ENCODE measurements at regions of chr3 and their contacts with region 1.

Region 1: GRCh38 chr3:100708967-100709841 is at the start of gene TFG:
- DNase-seq: peak; percentile 93 to 100 (median 97)
- ATAC-seq: peak; percentile 89
- H3K4me3 ChIP-seq: peak within 1 kb of the TSS; percentile 59 to 94
- H3K4me3 Mint-ChIP-seq: peak within 1 kb of the TSS; percentile 91
- H3K27ac ChIP-seq: peak within 1 kb of the TSS; percentile 87 to 90
- H3K27ac Mint-ChIP-seq: peak within 1 kb of the TSS; percentile 96
- H3K4me1 ChIP-seq: peaks cover 22% of the 10 kb centered on the region
- H3K4me1 Mint-ChIP-seq: peaks cover 47% of the 10 kb centered on the region
- H3K27me3 ChIP-seq: no peaks in the 10 kb centered on the region
- H3K27me3 Mint-ChIP-seq: no peaks in the 10 kb centered on the region
- CTCF ChIP-seq: no peak
- total RNA-seq, gene TFG: 76.3 to 88.3 TPM

Region 2: GRCh38 chr3:99808151-99808794 is 900.9 kb before region 1 on chr3:
- CTCF ChIA-PET with region 1: no interaction called
- POLR2A ChIA-PET with region 1: no interaction called
- intact Hi-C with region 1: loop called in 1 of 2 experiments (anchors 5 kb)
- DNase-seq: peak in 6 of 9 experiments; percentile 10 to 72 (median 44)
- ATAC-seq: peak; percentile 72
- H3K4me3 ChIP-seq: no peak overlapping the region
- H3K4me3 Mint-ChIP-seq: no peak overlapping the region
- H3K27ac ChIP-seq: no peak overlapping the region
- H3K27ac Mint-ChIP-seq: no peak overlapping the region
- H3K4me1 ChIP-seq: no peaks in the 10 kb centered on the region
- H3K4me1 Mint-ChIP-seq: peaks cover 3% of the 10 kb centered on the region
- H3K27me3 ChIP-seq: no peaks in the 10 kb centered on the region
- H3K27me3 Mint-ChIP-seq: no peaks in the 10 kb centered on the region
- CTCF ChIP-seq: peak; percentile 76

Region 3: GRCh38 chr3:100260685-100261484 is 448.3 kb before region 1 on chr3 and contains the start of gene TBC1D23:
- CTCF ChIA-PET with region 1: no interaction called
- POLR2A ChIA-PET with region 1: interaction called, 5 read pairs
- intact Hi-C with region 1: loop called in 1 of 2 experiments (anchors 2 kb)
- DNase-seq: peak; percentile 91 to 99 (median 97)
- ATAC-seq: peak; percentile 98
- H3K4me3 ChIP-seq: peak within 1 kb of the TSS; percentile 80 to 90
- H3K4me3 Mint-ChIP-seq: peak within 1 kb of the TSS; percentile 95
- H3K27ac ChIP-seq: peak within 1 kb of the TSS; percentile 91 to 94
- H3K27ac Mint-ChIP-seq: peak within 1 kb of the TSS; percentile 98
- H3K4me1 ChIP-seq: peaks cover 17% of the 10 kb centered on the region
- H3K4me1 Mint-ChIP-seq: peaks cover 60% of the 10 kb centered on the region
- H3K27me3 ChIP-seq: no peaks in the 10 kb centered on the region
- H3K27me3 Mint-ChIP-seq: no peaks in the 10 kb centered on the region
- CTCF ChIP-seq: no peak
- total RNA-seq, gene TBC1D23: 38.9 to 43.9 TPM

Region 4: GRCh38 chr3:100400780-100401673 is 308.2 kb before region 1 on chr3 and contains the starts of genes LNP1 and TOMM70:
- CTCF ChIA-PET with region 1: no interaction called
- POLR2A ChIA-PET with region 1: interaction called, 17 read pairs
- intact Hi-C with region 1: loop called (anchors 1 to 2 kb)
- DNase-seq: peak; percentile 85 to 97 (median 94)
- ATAC-seq: peak; percentile 85
- H3K4me3 ChIP-seq: peak within 1 kb of the TSS; percentile 76 to 92
- H3K4me3 Mint-ChIP-seq: peak within 1 kb of the TSS; percentile 98
- H3K27ac ChIP-seq: peak within 1 kb of the TSS; percentile 77 to 92
- H3K27ac Mint-ChIP-seq: peak within 1 kb of the TSS; percentile 99
- H3K4me1 ChIP-seq: peaks cover 46% of the 10 kb centered on the region
- H3K4me1 Mint-ChIP-seq: peaks cover 73% of the 10 kb centered on the region
- H3K27me3 ChIP-seq: no peaks in the 10 kb centered on the region
- H3K27me3 Mint-ChIP-seq: no peaks in the 10 kb centered on the region
- CTCF ChIP-seq: no peak
- total RNA-seq, gene LNP1: 1.1 to 1.2 TPM
- total RNA-seq, gene TOMM70: 27.7 to 30.5 TPM

Region 5: GRCh38 chr3:101561630-101562328 is 852.6 kb after region 1 on chr3 and contains the start of gene TRMT10C:
- CTCF ChIA-PET with region 1: no interaction called
- POLR2A ChIA-PET with region 1: no interaction called
- intact Hi-C with region 1: loop called (anchors 1 to 5 kb)
- DNase-seq: peak; percentile 86 to 96 (median 92)
- ATAC-seq: peak; percentile 95
- H3K4me3 ChIP-seq: peak within 1 kb of the TSS; percentile 83 to 96
- H3K4me3 Mint-ChIP-seq: peak within 1 kb of the TSS; percentile 99
- H3K27ac ChIP-seq: peak within 1 kb of the TSS; percentile 86 to 93
- H3K27ac Mint-ChIP-seq: peak within 1 kb of the TSS; percentile 99
- H3K4me1 ChIP-seq: peaks cover 12% of the 10 kb centered on the region
- H3K4me1 Mint-ChIP-seq: peaks cover 27% of the 10 kb centered on the region
- H3K27me3 ChIP-seq: no peaks in the 10 kb centered on the region
- H3K27me3 Mint-ChIP-seq: peaks cover 1% of the 10 kb centered on the region
- CTCF ChIP-seq: no peak
- total RNA-seq, gene TRMT10C: 41.5 to 44.0 TPM

Region 6: GRCh38 chr3:101685870-101686412 is 976.7 kb after region 1 on chr3:
- CTCF ChIA-PET with region 1: no interaction called
- POLR2A ChIA-PET with region 1: interaction called, 4 read pairs
- intact Hi-C with region 1: loop called in 1 of 2 experiments (anchors 5 kb)
- DNase-seq: no peak
- ATAC-seq: peak; percentile 3
- H3K4me3 ChIP-seq: peak overlapping the region; percentile 89 to 93
- H3K4me3 Mint-ChIP-seq: peak overlapping the region; percentile 100
- H3K27ac ChIP-seq: peak overlapping the region; percentile 94 to 96
- H3K27ac Mint-ChIP-seq: peak overlapping the region; percentile 99
- H3K4me1 ChIP-seq: peaks cover 39% of the 10 kb centered on the region
- H3K4me1 Mint-ChIP-seq: peaks cover 36% of the 10 kb centered on the region
- H3K27me3 ChIP-seq: no peaks in the 10 kb centered on the region
- H3K27me3 Mint-ChIP-seq: no peaks in the 10 kb centered on the region
- CTCF ChIP-seq: no peak

Region 7: DNA sequence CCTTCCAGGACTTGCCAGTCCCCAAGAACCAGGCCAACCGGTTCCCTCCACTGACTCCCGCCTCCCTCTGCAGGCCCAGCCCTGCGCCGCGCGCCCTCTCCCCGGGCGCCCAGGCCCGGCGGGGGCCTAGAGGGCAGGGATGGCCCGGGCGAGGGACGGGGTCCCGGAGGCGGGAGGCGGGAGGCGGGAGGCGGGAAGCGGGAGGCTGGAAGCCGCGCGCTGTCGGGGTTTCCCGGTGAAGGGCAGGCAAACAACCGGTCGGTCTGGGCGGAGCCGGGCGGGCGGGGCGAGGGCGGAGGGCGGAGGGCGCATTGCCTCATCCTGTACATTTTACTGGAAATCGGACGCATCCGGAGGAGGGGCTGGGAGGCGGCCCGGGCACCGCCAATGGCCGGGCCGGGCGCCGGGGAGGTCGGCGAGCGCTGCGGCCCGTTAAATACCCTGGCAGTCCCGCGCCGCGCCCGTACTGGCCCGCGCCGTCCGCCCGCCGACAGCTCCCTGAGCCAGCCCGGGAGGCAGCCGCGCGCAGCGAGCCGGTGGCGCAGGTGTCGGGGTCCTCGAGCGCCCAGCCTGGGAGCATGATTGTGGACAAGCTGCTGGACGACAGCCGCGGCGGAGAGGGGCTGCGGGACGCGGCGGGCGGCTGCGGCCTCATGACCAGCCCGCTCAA is 1140.0 kb after region 1 on chr3 and contains the start of gene NFKBIZ:
- CTCF ChIA-PET with region 1: no interaction called
- POLR2A ChIA-PET with region 1: no interaction called
- intact Hi-C with region 1: loop called in 1 of 2 experiments (anchors 10 kb)
- DNase-seq: peak; percentile 85 to 96 (median 91)
- ATAC-seq: peak; percentile 73
- H3K4me3 ChIP-seq: peak within 1 kb of the TSS; percentile 75 to 92
- H3K4me3 Mint-ChIP-seq: peak within 1 kb of the TSS; percentile 96
- H3K27ac ChIP-seq: peak within 1 kb of the TSS; percentile 94 to 96
- H3K27ac Mint-ChIP-seq: peak within 1 kb of the TSS; percentile 97
- H3K4me1 ChIP-seq: peaks cover 30% of the 10 kb centered on the region
- H3K4me1 Mint-ChIP-seq: peaks cover 39% of the 10 kb centered on the region
- H3K27me3 ChIP-seq: no peaks in the 10 kb centered on the region
- H3K27me3 Mint-ChIP-seq: no peaks in the 10 kb centered on the region
- CTCF ChIP-seq: no peak
- total RNA-seq, gene NFKBIZ: 460 to 477 TPM

Measured in CD8-positive, alpha-beta T cell (primary cell).